Endothelial cell of umbilical vein (primary cell): ENCODE measurements at regions of chr11 and their contacts with region 1.

Region 1: DNA sequence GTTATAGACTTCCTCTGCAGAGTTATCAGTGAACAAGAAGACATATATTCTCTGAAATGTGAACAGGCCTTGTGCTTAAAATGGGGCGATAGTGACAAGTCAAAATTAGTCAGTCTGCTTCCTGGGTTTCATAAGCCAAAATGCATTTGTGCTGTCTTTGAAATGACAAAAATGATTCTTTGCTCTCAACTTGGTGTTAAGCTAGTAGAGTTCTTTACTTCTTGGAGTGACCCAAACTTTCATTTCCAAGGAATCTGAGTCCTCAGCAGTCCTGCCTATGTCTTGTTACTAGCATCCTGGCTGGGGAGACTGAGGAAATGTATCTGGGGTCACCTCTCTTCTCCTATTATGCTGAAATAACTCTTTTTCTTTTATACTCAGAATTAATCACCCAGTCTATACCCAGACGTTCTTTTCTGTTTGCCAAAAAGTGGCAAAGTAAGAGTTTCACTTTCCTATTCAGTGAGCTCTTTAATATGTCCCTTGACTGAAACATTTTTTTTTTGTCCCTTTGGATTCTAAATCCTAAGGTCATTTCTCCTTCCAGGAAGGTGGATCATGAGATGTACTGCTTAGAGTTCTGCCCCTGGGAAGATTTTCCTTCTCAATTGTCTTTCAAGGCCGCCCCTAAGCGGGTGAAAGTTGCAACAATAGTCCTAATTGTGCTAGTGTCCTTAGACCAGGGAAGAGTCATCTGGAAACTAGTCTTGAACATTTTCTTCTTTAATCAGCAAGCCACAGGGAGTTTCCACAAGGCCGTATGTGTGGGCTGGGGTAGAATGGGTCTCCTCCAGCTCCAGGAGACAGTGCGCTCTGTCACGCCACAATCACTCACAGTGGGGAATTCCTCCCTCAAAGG is 53.0 kb upstream of the RDX start:
- DNase-seq: no peak
- H3K4me3 ChIP-seq: no peak overlapping the region
- H3K27ac ChIP-seq: no peak overlapping the region
- H3K4me1 ChIP-seq: peaks cover 6% of the 10 kb centered on the region
- H3K27me3 ChIP-seq: no peaks in the 10 kb centered on the region
- CTCF ChIP-seq: no peak
- POLR2A ChIP-seq: no peak

Region 2: GRCh38 chr11:110337570-110338193 is 11.7 kb before region 1 on chr11:
- CTCF ChIA-PET with region 1: interaction called, 4 read pairs
- POLR2A ChIA-PET with region 1: no interaction called
- dilution Hi-C with region 1: no loop called
- intact Hi-C with region 1: loop called (anchors 2 kb)
- DNase-seq: peak; percentile 73
- H3K4me3 ChIP-seq: no peak overlapping the region
- H3K27ac ChIP-seq: peak overlapping the region; percentile 34
- H3K4me1 ChIP-seq: peaks cover 10% of the 10 kb centered on the region
- H3K27me3 ChIP-seq: no peaks in the 10 kb centered on the region
- CTCF ChIP-seq: no peak
- POLR2A ChIP-seq: no peak

Region 3: GRCh38 chr11:110812086-110812733 is 462.8 kb after region 1 on chr11:
- CTCF ChIA-PET with region 1: no interaction called
- POLR2A ChIA-PET with region 1: no interaction called
- dilution Hi-C with region 1: no loop called
- intact Hi-C with region 1: no loop called
- DNase-seq: no peak
- H3K4me3 ChIP-seq: no peak overlapping the region
- H3K27ac ChIP-seq: no peak overlapping the region
- H3K4me1 ChIP-seq: no peaks in the 10 kb centered on the region
- H3K27me3 ChIP-seq: no peaks in the 10 kb centered on the region
- CTCF ChIP-seq: no peak
- POLR2A ChIP-seq: no peak